ENCODE measurements at regions of chr6 and their contacts with region 1.

Region 1: GRCh38 chr6:24699521-24700359 is 19.2 kb downstream of the C6orf62 start:
- DNase-seq: no peak
- ATAC-seq: peak in 1 of 4 donors; percentile 30
- H3K4me3 ChIP-seq: no peak overlapping the region
- H3K27ac ChIP-seq: no peak overlapping the region
- H3K4me1 ChIP-seq: no peaks in the 10 kb centered on the region
- H3K27me3 ChIP-seq: no peaks in the 10 kb centered on the region
- CTCF ChIP-seq: no peak

Region 2: GRCh38 chr6:24431045-24431451 is 268.7 kb before region 1 on chr6:
- intact Hi-C with region 1: loop called in 1 of 2 experiments (anchors 10 kb)
- DNase-seq: no peak
- ATAC-seq: peak; percentile 65 to 75 (median 68)
- H3K4me3 ChIP-seq: no peak overlapping the region
- H3K27ac ChIP-seq: no peak overlapping the region
- H3K4me1 ChIP-seq: peaks cover 14% of the 10 kb centered on the region
- H3K27me3 ChIP-seq: no peaks in the 10 kb centered on the region
- CTCF ChIP-seq: peak; percentile 68

Region 3: GRCh38 chr6:24666641-24667377 is 32.9 kb before region 1 on chr6 and contains the starts of genes ACOT13 and TDP2:
- intact Hi-C with region 1: loop called in 1 of 2 experiments (anchors 5 kb)
- DNase-seq: peak; percentile 96 to 99
- ATAC-seq: peak; percentile 99 to 100 (median 100)
- H3K4me3 ChIP-seq: peak within 1 kb of the TSS; percentile 94
- H3K27ac ChIP-seq: peak within 1 kb of the TSS; percentile 92
- H3K4me1 ChIP-seq: peaks cover 33% of the 10 kb centered on the region
- H3K27me3 ChIP-seq: no peaks in the 10 kb centered on the region
- CTCF ChIP-seq: peak; percentile 59
- total RNA-seq, gene ACOT13: 36.3 to 50.7 (median 37.6) TPM
- total RNA-seq, gene TDP2: 16.3 to 22.1 (median 19.8) TPM